Posterior vena cava (tissue), 2 donors: ENCODE measurements at regions of chr5 and their contacts with region 1.

Region 1: GRCh38 chr5:35869685-35870277 is 13.1 kb downstream of the IL7R start:
- DNase-seq: no peak

Region 2: GRCh38 chr5:34022121-34022705 is 1847.6 kb before region 1 on chr5:
- intact Hi-C with region 1: no loop called
- DNase-seq: no peak

Region 3: DNA sequence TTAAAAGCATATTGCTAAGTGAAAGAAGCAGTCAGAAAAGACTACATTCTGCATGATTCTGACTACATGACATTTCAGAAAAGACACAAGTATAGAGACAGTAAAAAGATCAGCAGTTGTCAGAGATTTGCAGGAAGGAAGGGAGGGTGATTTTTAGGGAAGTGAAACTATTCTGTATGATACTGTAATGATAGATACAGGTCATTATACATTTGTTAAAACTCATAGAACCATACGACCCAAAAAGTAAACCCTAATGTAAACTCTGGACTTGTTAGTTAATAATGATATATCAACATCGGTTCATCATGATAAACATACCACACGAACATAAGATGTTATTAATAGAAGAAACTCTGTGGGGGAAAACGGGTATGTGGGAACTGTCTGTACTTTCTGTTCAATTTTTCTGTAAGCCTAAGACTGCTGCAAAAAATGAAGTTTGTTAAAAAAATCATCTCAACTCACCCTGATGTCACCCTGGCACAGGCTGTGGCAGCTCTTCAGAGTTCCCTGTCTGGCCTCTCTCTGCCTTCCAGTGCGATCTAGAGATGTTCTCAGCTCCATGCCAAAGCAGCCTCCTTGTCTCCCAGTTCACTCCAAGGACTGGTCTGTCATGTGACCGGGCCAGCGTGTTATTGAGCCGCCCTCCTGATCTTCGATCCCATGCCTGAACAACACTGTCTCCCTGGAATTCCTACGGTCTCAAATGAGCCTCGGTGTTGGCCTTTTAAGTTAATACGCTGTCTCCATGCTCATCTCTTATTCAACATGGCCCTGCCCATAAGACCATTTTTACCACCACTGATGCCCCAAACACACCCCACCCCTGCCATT is 674.9 kb before region 1 on chr5:
- intact Hi-C with region 1: loop called in 1 of 2 experiments (anchors 5 kb)
- DNase-seq: no peak